ENCODE measurements at regions of chr15 and their contacts with region 1.

Region 1: DNA sequence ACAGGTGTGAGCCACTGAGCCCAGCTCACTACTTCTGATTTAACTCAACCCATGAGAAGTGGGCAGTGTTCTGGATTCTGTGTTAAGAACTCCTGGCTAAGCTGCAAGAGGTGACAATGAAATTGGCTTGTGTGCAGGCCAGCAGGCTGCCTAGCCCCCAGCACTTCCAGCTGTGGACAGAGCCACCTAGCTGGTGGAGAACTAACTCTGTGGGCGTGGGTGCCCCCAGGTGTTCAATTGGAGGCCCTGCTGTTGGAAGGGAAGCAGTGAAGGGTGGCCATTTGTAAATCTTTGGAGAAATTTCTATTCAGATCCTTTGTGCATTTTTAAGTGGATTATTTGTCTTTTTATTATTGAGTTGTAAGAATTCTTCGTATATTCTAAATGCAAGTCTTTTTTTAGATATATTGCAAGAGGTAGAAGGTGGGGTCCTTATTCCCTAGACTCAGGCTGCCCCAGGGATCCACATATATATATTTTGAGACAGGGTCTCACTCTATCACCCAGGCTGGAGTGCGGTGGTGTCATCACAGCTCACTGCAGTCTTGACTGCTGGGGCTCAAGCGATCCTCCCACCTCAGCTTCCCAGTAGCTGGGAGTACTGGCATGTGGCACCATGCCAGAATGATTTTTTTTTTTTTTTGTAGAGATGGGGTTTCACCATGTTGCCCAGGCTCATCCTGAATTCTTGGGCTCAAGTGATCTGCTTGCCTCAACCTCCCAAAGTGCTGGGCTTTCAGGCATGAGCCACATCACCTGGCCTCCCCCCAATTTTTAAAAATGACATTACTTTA is 7.2 kb upstream of the SCAMP5 start:
- DNase-seq: peak; percentile 76
- ATAC-seq: peak; percentile 57
- H3K4me3 Mint-ChIP-seq: no peak overlapping the region
- H3K27ac Mint-ChIP-seq: no peak overlapping the region
- H3K4me1 Mint-ChIP-seq: peaks cover 16% of the 10 kb centered on the region
- H3K27me3 Mint-ChIP-seq: peaks cover 13% of the 10 kb centered on the region

Region 2: GRCh38 chr15:74964794-74965193 is 23.4 kb before region 1 on chr15:
- CTCF ChIA-PET with region 1: interaction called, 4 read pairs
- POLR2A ChIA-PET with region 1: no interaction called
- intact Hi-C with region 1: loop called in 1 of 2 experiments (anchors 1 kb)
- DNase-seq: no peak
- ATAC-seq: no peak
- H3K4me3 Mint-ChIP-seq: no peak overlapping the region
- H3K27ac Mint-ChIP-seq: no peak overlapping the region
- H3K4me1 Mint-ChIP-seq: peaks cover 16% of the 10 kb centered on the region
- H3K27me3 Mint-ChIP-seq: peaks cover 2% of the 10 kb centered on the region

Region 3: DNA sequence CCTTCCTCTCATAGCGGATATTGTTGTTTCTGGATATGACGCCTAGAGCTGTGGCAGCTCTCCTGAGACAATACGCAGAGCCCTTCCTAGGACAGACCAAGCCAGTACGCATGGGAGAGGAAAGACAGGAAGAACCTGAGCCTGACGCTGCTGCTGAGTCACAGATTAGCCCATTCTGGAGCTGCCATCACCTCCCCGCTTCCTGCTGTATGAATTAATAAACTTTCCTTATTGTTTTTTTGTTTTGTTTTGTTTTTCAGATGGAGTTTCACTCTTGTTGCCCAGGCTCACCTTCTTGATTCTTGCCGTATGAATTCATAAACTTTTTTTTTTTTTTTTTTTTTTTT is 102.2 kb after region 1 on chr15:
- CTCF ChIA-PET with region 1: no interaction called
- POLR2A ChIA-PET with region 1: no interaction called
- intact Hi-C with region 1: loop called in 1 of 2 experiments (anchors 1 kb)
- DNase-seq: no peak
- ATAC-seq: no peak
- H3K4me3 Mint-ChIP-seq: no peak overlapping the region
- H3K27ac Mint-ChIP-seq: no peak overlapping the region
- H3K4me1 Mint-ChIP-seq: peaks cover 18% of the 10 kb centered on the region
- H3K27me3 Mint-ChIP-seq: peaks cover 11% of the 10 kb centered on the region